Prostate gland (tissue), 2 donors: ENCODE measurements at regions of chrX and their contacts with region 1.

Region 1: DNA sequence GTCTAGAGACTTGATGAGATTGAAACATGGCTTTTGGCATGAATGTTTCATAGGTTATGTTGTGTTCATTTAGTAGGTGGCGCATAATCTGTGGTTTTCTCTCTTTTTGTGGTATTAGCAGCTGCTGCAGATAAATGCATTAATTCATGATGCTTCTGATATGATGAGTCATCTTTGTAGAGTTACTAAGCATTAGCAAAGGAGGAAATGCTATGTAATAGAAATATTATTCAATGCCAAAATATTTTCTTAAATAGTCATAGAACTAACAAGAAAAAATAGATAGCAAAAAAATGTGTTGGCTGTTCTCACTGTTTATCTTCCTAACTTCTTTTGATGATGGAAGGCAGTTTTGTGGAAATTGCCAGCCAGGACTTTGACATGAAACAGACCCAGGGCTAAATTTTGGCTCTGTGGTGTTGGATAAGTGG is 3.6 kb downstream of the ZXDB start:
- DNase-seq: no peak
- H3K4me3 ChIP-seq: no peak overlapping the region
- H3K27ac ChIP-seq: no peak overlapping the region
- H3K4me1 ChIP-seq: no peaks in the 10 kb centered on the region
- H3K27me3 ChIP-seq: no peaks in the 10 kb centered on the region
- CTCF ChIP-seq: no peak
- POLR2A ChIP-seq: no peak

Region 2: DNA sequence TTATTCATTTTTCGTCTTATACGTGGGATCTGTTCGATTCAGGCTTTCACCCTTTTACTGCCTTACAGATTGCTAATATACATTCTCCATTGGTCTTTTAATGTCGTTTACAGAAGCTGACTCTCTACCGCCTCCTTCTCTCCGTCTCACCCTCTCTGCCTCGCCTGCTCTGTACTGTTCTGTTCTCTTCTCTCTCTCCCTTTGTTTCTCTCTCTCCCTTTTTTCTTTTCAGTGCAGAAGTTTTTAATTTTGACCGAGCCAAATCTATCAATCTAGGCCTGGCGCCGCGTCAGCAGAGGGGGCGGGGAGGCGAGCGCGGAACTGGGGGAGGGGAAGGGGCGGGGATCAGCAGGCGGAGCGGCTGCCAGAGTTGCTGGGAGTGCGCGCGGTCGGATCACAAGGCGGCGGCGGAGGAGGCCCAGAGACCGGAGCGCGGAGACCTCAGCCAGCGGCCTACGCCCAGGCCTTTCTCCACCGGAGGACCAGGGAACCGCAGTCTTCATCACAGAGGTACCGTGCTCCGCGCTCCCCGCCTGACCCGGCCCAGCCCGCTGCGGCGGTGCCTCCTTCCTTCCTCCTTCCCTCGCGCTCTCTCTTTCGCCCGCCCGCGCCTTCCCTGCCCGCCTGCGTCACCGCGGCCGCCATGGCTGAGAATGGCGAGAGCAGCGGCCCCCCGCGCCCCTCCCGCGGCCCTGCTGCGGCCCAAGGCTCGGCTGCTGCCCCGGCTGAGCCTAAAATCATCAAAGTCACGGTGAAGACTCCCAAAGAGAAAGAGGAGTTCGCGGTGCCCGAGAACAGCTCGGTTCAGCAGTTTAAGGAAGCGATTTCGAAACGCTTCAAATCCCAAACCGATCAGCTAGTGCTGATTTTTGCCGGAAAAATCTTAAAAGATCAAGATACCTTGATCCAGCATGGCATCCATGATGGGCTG is 1031.9 kb before region 1 on chrX and contains the start of gene UBQLN2:
- intact Hi-C with region 1: loop called (anchors 10 kb)
- DNase-seq: peak; percentile 79
- H3K4me3 ChIP-seq: peak within 1 kb of the TSS; percentile 50 to 52
- H3K27ac ChIP-seq: peak within 1 kb of the TSS; percentile 91 to 96
- H3K4me1 ChIP-seq: no peaks in the 10 kb centered on the region
- H3K27me3 ChIP-seq: no peaks in the 10 kb centered on the region
- CTCF ChIP-seq: no peak
- POLR2A ChIP-seq: peak; percentile 74
- total RNA-seq, gene UBQLN2: 31.3 to 33.3 TPM

Region 3: DNA sequence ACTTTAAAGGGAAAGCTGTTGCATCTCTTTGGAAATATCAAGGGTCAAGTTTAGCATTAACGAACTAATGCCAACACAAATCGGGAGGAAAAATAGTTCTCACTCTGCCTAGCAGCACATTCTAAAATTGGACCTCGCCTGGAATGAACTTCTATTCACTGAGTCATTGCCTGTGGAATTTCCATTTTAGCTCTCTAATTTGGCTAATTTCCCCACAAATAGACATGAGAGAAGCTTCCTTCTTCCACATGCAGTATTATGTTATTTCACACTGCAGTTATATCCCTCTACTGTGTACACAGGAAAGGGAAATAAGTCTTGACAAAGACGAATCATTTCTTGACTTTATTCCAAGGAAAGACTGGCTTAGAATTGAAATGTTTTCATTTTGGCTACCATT is 305.6 kb after region 1 on chrX:
- intact Hi-C with region 1: loop called (anchors 10 kb)
- DNase-seq: no peak
- H3K4me3 ChIP-seq: no peak overlapping the region
- H3K27ac ChIP-seq: no peak overlapping the region
- H3K4me1 ChIP-seq: no peaks in the 10 kb centered on the region
- H3K27me3 ChIP-seq: no peaks in the 10 kb centered on the region
- CTCF ChIP-seq: no peak
- POLR2A ChIP-seq: no peak